Activated naive CD4-positive, alpha-beta T cell treated with anti-CD3 and anti-CD28 coated beads for 36 hours (primary cell): ENCODE measurements at regions of chr22 and their contacts with region 1.

Region 1: GRCh38 chr22:22710719-22711531 is 66.5 kb downstream of the GGTLC2 start:
- DNase-seq: peak; percentile 82
- H3K4me3 Mint-ChIP-seq: no peak overlapping the region
- H3K27ac Mint-ChIP-seq: no peak overlapping the region
- H3K4me1 Mint-ChIP-seq: no peaks in the 10 kb centered on the region
- H3K27me3 Mint-ChIP-seq: no peaks in the 10 kb centered on the region

Region 2: DNA sequence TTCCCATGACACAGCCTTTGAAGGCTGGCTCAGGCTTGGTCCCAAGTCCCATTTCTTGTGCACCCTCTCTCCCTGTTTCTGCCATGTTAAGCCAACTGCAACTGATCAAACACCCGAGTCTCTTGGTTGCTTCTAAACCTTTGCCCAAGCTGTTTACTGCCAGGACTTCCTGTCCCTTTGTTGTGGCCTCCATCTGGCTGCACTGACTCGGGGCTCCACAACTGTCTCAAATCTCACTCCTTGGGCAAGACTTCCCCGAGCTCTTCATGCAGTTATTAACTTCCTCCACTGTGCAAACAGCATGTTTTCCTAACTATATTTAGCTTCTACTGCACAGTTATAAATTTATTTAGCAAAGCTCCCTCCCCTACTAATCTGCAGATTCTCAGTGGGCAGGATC is 462.0 kb before region 1 on chr22:
- CTCF ChIA-PET with region 1: no interaction called
- intact Hi-C with region 1: no loop called
- DNase-seq: peak; percentile 16
- H3K4me3 Mint-ChIP-seq: no peak overlapping the region
- H3K27ac Mint-ChIP-seq: no peak overlapping the region
- H3K4me1 Mint-ChIP-seq: peaks cover 12% of the 10 kb centered on the region
- H3K27me3 Mint-ChIP-seq: peaks cover 7% of the 10 kb centered on the region

Region 3: DNA sequence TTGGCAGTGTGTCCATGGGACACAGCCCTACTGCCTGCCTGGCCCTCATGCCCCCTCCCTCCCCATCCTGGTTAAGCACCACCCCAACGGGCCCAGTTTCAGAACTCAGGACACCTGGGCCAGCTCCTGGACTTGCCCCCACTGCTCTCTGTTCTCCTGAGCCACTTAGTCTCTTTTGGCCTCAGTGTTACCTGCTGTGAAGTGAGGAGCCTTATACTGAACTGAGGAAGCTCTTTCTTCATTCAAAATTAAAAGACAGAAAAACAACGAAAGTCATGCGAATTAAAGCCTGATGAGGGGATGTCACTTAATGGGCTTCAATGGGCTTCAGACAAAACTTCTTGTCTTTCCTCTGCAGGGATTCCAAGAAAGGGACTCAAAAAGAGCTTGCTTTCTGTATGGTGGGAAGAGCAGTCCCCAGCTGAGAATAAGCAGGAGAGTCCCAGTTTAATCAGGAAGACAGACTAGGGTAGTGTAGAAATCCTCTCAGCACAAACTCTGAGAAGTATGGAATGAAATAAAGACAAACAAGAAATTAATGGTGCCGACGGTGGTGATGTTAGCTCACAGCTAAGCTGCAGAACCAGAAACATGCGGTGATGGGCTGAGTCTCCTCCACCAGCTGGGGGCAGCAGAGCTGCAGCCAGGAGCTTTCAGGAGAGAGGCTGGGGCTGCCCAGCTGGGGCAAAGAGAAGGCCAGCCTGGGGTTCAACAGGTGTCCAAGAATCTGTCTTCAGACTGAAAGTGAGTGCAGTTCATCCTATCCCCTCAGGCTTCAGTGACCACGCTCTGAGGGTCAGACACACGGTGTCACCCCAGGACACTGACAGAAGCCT is 34.5 kb after region 1 on chr22:
- CTCF ChIA-PET with region 1: interaction called, 6 read pairs
- intact Hi-C with region 1: loop called (anchors 2 kb)
- DNase-seq: peak; percentile 52
- H3K4me3 Mint-ChIP-seq: no peak overlapping the region
- H3K27ac Mint-ChIP-seq: no peak overlapping the region
- H3K4me1 Mint-ChIP-seq: no peaks in the 10 kb centered on the region
- H3K27me3 Mint-ChIP-seq: peaks cover 5% of the 10 kb centered on the region

Region 4: DNA sequence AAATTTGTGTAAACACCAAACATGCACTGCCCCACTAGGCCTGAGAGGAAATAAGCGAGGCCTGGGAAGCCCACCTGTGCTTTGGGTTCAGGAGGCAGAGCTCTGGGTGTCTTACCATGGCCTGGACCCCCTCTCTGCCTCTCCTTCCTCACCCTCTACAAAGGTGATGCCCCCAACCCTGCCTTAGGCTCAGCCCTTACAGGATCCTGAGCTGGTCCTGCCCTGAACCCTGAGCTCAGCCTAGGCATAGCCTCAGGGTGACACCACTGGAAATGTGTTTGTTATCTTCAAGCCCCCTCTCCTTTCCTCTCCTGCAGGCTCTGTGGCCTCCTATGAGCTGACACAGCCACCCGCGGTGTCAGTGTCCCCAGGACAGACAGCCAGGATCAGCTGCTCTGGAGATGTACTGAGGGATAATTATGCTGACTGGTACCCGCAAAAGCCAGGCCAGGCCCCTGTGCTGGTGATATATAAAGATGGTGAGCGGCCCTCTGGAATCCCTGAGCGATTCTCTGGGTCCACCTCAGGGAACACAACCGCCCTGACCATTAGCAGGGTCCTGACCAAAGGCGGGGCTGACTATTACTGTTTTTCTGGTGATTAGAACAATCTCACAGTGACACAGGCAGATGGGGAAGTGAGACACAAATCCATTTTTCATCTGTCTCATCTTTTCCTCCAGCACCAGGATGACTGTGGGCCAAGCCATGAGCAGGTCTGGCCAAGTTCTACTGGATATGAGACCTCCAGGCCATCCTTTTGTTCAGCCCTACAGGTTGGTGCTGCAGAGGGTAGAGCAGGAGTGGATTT is 51.2 kb after region 1 on chr22:
- CTCF ChIA-PET with region 1: no interaction called
- intact Hi-C with region 1: loop called (anchors 2 kb)
- DNase-seq: no peak
- H3K4me3 Mint-ChIP-seq: no peak overlapping the region
- H3K27ac Mint-ChIP-seq: no peak overlapping the region
- H3K4me1 Mint-ChIP-seq: peaks cover 3% of the 10 kb centered on the region
- H3K27me3 Mint-ChIP-seq: no peaks in the 10 kb centered on the region